SK-N-SH (cell line): ENCODE measurements at regions of chr1 and their contacts with region 1.

Region 1: DNA sequence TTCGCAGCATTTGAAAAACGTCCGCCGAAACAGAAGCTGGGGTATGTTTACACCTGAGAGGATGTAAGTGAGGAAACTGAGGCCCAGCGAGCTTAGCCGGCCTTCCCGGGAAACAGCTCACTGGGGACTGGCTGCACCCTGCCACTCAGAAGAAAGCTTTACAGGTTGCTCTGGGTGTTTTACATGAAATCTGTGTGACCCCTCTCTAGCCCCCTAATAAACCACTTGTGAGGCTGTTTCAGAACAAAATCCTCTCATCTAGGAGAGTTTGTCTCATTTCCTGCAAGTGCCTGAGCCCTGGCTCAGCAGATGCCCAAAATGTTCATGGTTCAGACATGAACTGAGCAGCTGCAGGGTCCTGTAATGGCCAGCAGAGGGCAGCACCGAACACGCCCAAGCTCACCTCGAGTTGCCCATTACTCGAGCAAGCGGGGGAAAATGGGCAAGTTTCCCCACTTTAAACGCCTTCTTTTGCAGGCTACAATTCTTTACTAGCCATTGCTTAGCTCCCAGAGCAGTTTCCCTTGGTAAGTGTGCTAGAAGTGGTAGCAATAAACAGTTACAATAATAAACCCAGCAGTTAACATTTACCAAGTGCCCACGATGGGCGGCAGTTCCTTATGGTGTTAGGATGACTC is 76.4 kb downstream of the FHAD1 start:
- DNase-seq: peak; percentile 82
- H3K4me3 ChIP-seq: peak overlapping the region in 1 of 2 experiments; percentile 30; a peak in 1 of 4 replicates
- H3K27ac ChIP-seq: peak overlapping the region in 1 of 2 experiments; percentile 68; a peak in 2 of 4 replicates
- H3K4me1 ChIP-seq: peaks cover 0 to 38% of the 10 kb centered on the region in 2 experiments; a peak in 1 of 4 replicates
- H3K27me3 ChIP-seq: no peaks in the 10 kb centered on the region
- CTCF ChIP-seq: peak; percentile 98
- EP300 ChIP-seq: no peak
- RAD21 ChIP-seq: peak; percentile 83

Region 2: DNA sequence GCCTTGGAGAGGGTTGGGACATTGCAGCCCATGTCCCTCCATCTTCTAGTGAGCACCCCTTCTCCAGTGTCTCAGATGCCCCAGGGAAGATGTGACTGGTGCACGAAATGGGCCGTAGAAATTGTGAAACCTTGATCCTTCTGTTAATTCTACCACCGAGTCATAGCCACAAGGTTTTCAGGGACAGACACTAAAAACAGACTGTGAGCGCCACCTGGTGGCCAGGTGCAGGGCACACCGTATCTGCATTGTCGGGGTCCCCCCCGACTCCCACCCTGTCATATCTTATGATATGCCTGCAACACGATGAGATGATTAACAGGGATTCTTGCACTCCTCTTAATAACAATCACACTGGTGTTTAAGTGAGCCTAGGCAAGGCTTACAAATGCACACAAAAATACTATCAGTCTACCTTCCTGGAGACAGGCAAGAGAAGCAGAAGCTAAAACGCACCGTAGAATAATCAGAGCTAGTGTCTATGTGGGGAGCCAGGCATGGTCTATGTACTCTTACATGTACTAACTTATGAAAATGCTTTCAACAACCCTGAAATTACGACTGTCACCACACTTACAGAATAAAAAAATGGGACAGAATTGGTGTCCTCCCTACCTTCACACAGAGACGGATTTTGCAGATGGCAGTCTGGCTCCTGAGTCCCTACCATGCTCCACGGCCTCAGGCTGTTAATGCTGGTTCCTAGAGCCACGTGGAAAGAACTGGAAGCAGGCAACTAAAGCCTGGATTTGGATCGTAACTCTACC is 18.6 kb before region 1 on chr1:
- CTCF ChIA-PET with region 1: interaction called, 20 read pairs
- POLR2A ChIA-PET with region 1: no interaction called
- DNase-seq: peak; percentile 79
- H3K4me3 ChIP-seq: peak overlapping the region in 1 of 2 experiments; percentile 38; a peak in 1 of 4 replicates
- H3K27ac ChIP-seq: no peak overlapping the region
- H3K4me1 ChIP-seq: peaks cover 0 to 6% of the 10 kb centered on the region in 2 experiments; a peak in 1 of 4 replicates
- H3K27me3 ChIP-seq: no peaks in the 10 kb centered on the region
- CTCF ChIP-seq: peak; percentile 94
- EP300 ChIP-seq: no peak
- RAD21 ChIP-seq: peak; percentile 84

Region 3: DNA sequence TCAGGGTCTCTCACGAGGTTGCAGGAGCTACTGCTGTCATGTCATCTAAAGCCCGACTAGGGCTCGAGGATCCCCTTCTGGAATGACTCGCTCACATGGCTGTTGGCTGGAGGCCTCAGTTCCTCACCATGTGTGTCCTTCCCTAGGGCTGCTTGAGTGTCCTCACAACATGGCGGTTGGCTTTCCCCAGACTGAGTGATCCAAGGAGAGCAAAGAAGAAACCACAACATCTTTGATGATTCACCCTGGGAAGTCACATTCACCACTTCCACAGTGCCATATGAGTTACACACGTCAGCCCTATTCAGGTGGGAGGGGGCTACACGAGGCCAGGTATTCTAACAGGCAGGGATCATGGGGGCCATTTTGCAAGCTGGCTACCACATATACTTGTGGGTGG is 11.6 kb before region 1 on chr1:
- CTCF ChIA-PET with region 1: interaction called, 21 read pairs
- POLR2A ChIA-PET with region 1: no interaction called
- DNase-seq: no peak
- H3K4me3 ChIP-seq: no peak overlapping the region
- H3K27ac ChIP-seq: no peak overlapping the region
- H3K4me1 ChIP-seq: no peaks in the 10 kb centered on the region
- H3K27me3 ChIP-seq: no peaks in the 10 kb centered on the region
- CTCF ChIP-seq: no peak
- EP300 ChIP-seq: no peak
- RAD21 ChIP-seq: no peak

Region 4: DNA sequence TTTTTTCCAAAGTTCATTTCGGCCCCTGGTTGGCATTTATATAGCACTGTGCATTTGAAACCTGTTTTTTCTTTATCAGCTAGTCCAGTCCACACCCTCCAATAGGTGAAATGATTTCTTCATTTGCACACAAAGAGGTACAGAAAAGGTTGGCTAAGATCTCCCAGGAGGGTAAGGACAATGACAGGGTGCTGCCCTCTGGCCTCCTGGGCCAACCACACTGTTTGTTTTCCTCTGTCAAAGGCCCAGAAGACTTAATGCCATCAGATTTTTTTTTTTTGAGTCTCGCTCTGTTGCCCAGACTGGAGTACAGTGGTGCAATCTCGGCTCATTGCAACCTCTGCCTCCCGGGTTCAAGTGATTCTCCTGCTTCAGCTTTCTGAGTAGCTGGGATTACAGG is 16.1 kb after region 1 on chr1:
- CTCF ChIA-PET with region 1: interaction called, 15 read pairs
- POLR2A ChIA-PET with region 1: no interaction called
- DNase-seq: no peak
- H3K4me3 ChIP-seq: no peak overlapping the region
- H3K27ac ChIP-seq: no peak overlapping the region
- H3K4me1 ChIP-seq: peaks cover 0 to 14% of the 10 kb centered on the region in 2 experiments; a peak in 2 of 4 replicates
- H3K27me3 ChIP-seq: no peaks in the 10 kb centered on the region
- CTCF ChIP-seq: no peak
- EP300 ChIP-seq: no peak
- RAD21 ChIP-seq: no peak

Region 5: GRCh38 chr1:15409388-15410222 is 86.1 kb after region 1 on chr1 and contains the start of gene EFHD2:
- CTCF ChIA-PET with region 1: interaction called, 14 read pairs
- POLR2A ChIA-PET with region 1: no interaction called
- DNase-seq: peak; percentile 96
- H3K4me3 ChIP-seq: peak within 1 kb of the TSS; percentile 84 to 92
- H3K27ac ChIP-seq: peak within 1 kb of the TSS; percentile 65 to 77; a peak in 3 of 4 replicates
- H3K4me1 ChIP-seq: peaks cover 30 to 36% of the 10 kb centered on the region in 2 experiments; a peak in 3 of 4 replicates
- H3K27me3 ChIP-seq: no peaks in the 10 kb centered on the region
- CTCF ChIP-seq: no peak
- EP300 ChIP-seq: no peak
- RAD21 ChIP-seq: no peak
- polyA plus RNA-seq, gene EFHD2: 45.1 and 59.8 TPM in 2 replicates

Region 6: DNA sequence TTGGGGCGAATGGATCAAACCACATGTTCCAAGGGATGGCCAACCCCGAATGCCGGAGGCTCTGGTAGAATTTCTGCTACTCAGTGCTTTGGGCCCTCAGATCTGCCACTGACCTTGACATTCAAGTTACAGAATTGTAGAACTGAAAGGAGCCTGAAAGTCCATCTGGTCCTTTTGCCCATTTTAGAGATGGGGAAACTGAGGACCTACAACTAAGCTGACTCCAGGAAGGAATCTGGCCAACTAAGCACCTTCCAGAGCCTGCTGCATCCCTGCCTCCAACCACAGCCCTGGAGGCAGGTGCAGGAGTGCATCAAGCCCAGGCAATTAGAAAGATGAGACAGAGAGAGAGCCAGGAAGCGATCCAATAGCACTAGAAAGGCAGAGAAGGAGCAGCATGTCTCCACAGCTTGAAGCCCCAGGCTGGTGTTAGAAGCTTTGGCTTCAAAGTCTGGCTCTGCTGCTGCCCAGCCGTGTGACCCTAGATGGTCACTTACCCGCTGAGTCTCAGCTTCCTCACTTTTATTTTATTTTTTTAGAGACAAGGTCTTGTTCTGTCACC is 113.5 kb after region 1 on chr1:
- CTCF ChIA-PET with region 1: interaction called, 311 read pairs
- POLR2A ChIA-PET with region 1: no interaction called
- DNase-seq: no peak
- H3K4me3 ChIP-seq: no peak overlapping the region
- H3K27ac ChIP-seq: no peak overlapping the region
- H3K4me1 ChIP-seq: no peaks in the 10 kb centered on the region
- H3K27me3 ChIP-seq: no peaks in the 10 kb centered on the region
- CTCF ChIP-seq: no peak
- EP300 ChIP-seq: no peak
- RAD21 ChIP-seq: no peak

Region 7: GRCh38 chr1:15444468-15445389 is 121.3 kb after region 1 on chr1:
- CTCF ChIA-PET with region 1: interaction called, 28 read pairs
- POLR2A ChIA-PET with region 1: no interaction called
- DNase-seq: no peak
- H3K4me3 ChIP-seq: no peak overlapping the region
- H3K27ac ChIP-seq: no peak overlapping the region
- H3K4me1 ChIP-seq: peaks cover 0 to 3% of the 10 kb centered on the region in 2 experiments; a peak in 1 of 4 replicates
- H3K27me3 ChIP-seq: no peaks in the 10 kb centered on the region
- CTCF ChIP-seq: no peak
- EP300 ChIP-seq: no peak
- RAD21 ChIP-seq: no peak

Region 8: GRCh38 chr1:15459771-15460719 is 136.6 kb after region 1 on chr1:
- CTCF ChIA-PET with region 1: no interaction called
- POLR2A ChIA-PET with region 1: no interaction called
- DNase-seq: peak; percentile 60
- H3K4me3 ChIP-seq: no peak overlapping the region
- H3K27ac ChIP-seq: no peak overlapping the region
- H3K4me1 ChIP-seq: peaks cover 5 to 8% of the 10 kb centered on the region in 2 experiments; a peak in 2 of 4 replicates
- H3K27me3 ChIP-seq: no peaks in the 10 kb centered on the region
- CTCF ChIP-seq: no peak
- EP300 ChIP-seq: no peak
- RAD21 ChIP-seq: no peak